GM18951 (cell line): ENCODE measurements at regions of chr4 and their contacts with region 1.

Region 1: DNA sequence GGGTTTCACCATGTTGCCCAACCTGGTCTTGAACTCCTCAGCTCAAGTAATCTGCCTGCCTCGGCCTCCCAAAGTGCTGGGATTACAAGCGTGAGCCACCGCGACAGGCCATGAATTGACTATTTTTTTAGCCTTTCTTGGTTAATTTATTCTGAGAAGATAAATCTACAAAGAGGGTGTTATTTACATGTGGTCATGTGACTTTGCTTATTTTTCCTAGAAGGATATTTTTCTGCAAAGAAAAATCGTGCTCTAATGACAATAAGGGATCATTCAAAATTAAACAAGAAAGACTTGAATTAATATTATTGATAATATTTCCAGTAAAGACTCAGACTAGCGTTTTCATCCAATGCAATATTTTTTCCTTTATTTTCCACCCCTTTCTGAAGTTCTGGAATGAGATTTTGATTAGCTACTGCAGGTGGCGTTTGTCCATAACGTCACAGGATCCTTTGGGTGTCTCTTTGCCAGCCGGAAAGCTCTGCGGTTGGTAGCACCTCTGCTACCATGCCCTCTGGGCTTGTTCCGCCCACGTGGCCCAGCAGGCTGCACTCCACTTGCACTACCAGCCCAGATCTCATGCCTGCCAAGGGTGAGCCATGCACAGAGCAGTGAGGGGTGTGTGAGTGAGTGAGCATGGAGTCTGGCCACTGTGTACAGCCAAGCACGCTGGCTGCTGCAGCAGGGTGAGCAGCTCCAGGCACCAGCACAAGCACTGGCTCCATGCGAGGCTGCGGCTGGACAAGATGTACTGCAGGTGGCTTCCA is 6.4 kb upstream of the HNRNPD start:
- POLR2A ChIP-seq: no peak

Region 2: GRCh38 chr4:81827577-81828202 is 552.5 kb before region 1 on chr4:
- in situ Hi-C with region 1: no loop called
- POLR2A ChIP-seq: no peak

Region 3: GRCh38 chr4:82138374-82138773 is 241.8 kb before region 1 on chr4:
- in situ Hi-C with region 1: no loop called
- POLR2A ChIP-seq: no peak

Region 4: DNA sequence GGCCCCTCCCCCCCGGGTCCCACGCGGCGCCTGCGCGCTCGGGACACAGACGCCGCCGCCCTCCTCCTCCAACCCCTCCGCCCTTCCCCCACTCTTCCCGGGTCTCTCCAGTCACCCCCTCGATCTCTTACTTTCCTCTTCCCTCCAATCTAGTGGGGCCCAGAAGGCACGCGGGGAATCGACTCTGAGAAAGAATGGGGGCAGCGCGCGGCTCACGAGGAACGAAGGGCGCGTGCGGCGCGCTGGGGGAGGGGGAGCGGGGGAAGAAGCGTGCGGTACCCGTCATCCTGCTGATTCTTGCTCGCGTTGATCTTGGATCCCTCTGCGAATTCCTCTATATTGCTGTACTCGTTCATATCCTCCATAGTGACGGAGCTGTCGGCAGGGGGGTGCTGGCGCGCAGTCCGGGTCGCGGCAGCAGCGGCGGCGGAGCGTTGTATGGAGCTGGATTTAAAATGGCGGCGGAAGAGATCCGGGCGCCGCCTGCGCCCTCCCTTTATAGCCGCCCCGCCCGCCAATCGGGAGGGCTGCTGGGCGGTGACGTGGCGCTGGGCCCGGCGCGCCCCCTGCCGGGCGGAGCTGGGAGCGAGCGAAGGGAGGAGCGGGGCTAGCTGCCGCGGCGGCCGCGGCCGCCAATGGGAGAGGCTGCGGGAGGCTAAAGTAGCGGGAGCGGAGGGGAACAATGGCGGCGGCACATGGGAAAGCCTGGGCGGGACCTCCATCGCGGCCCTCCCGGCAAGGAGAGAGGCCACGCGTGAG is 49.0 kb after region 1 on chr4:
- in situ Hi-C with region 1: loop called (anchors 5 kb)
- POLR2A ChIP-seq: peak; percentile 97